ENCODE measurements at regions of chr3 and their contacts with region 1.

Region 1: GRCh38 chr3:79521238-79521848 is 246.5 kb downstream of the ROBO1 start:
- DNase-seq: peak; percentile 73
- H3K4me3 ChIP-seq: no peak overlapping the region
- H3K27ac ChIP-seq: no peak overlapping the region
- H3K4me1 ChIP-seq: peaks cover 18% of the 10 kb centered on the region
- H3K27me3 ChIP-seq: no peaks in the 10 kb centered on the region
- CTCF ChIP-seq: peak; percentile 71

Region 2: DNA sequence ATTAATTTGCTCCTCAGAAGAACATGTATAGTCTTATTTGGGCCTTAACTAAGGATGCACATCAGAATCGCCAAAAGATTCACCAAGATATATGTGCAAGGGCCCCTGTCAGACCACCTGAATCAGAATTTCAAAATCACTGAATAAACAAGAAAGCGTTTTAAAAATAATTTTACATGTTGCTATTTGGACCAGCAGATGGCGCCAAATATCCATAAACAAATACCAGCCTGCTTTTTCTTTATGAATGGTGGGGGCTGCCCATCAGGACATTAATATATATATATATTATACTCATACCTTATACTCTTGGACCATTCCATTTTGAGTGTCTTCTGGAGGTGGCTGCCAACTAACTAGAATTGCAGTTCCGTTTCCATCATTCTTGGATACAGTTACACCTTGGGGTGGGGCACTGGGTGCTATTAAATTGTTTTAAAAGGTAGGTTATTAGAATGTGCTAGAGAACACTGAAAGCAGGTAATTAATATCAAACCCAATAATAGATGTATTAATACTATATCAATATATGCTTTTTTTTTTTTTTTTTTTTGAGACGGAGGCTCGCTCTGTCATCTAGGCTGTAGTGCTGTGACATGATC is 861.9 kb before region 1 on chr3:
- CTCF ChIA-PET with region 1: no interaction called
- POLR2A ChIA-PET with region 1: no interaction called
- intact Hi-C with region 1: loop called (anchors 5 kb)
- DNase-seq: peak; percentile 72
- H3K4me3 ChIP-seq: no peak overlapping the region
- H3K27ac ChIP-seq: no peak overlapping the region
- H3K4me1 ChIP-seq: peaks cover 21% of the 10 kb centered on the region
- H3K27me3 ChIP-seq: no peaks in the 10 kb centered on the region
- CTCF ChIP-seq: peak; percentile 72

Region 3: DNA sequence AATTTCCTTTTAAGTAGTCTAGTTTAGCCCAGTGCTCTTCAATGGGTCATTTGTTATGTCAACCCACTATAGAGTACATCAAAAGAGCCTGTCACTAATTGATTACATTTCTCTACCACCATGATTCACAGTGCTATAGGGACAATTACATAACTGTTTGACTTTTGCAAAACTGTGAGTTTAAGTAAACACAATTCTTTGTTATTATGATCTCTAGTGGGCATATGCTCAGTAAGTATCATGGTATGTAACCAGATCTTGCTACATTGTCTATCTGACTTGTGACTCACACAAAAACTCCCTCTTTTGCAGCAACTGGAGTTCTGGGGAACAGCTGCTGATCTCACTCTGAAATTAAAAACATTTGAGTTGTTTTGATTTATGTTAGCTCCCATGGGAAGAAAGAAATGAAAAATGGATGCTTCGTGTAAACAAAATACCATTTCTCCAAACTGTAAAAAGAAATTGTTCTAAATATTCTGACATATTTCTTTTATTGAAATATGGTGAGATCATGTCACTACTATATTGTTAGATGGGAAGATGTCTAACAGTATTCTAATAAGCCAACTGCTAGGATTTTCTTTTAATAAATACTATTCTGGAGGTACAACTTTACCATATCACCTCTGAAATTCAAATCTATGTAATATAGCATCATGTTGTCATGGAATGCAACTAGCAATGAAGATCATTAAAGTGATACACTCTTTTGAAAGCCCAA is 223.9 kb before region 1 on chr3:
- CTCF ChIA-PET with region 1: no interaction called
- POLR2A ChIA-PET with region 1: no interaction called
- intact Hi-C with region 1: no loop called
- DNase-seq: peak; percentile 7
- H3K4me3 ChIP-seq: no peak overlapping the region
- H3K27ac ChIP-seq: no peak overlapping the region
- H3K4me1 ChIP-seq: no peaks in the 10 kb centered on the region
- H3K27me3 ChIP-seq: no peaks in the 10 kb centered on the region
- CTCF ChIP-seq: no peak

Region 4: DNA sequence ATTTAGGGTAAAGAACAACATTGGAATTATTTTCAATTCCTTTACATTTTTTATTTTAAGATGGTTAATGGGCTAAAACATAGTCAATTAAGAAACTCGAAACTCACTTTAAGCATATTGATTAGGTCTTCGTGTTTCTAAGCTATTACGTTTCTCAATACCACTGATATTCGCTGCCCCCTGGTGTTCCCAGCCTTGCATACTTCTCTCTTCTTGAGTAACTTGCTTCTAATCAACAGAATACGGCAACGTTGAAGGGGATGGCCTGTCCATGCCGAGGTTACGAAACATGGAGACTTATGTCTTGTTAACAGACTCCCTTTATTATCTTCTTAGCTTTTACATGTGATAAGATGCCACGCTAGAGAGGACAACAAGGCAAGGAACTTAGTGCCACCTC is 202.9 kb after region 1 on chr3:
- CTCF ChIA-PET with region 1: interaction called, 10 read pairs
- POLR2A ChIA-PET with region 1: no interaction called
- intact Hi-C with region 1: loop called (anchors 2 kb)
- DNase-seq: peak; percentile 35
- H3K4me3 ChIP-seq: no peak overlapping the region
- H3K27ac ChIP-seq: no peak overlapping the region
- H3K4me1 ChIP-seq: peaks cover 2% of the 10 kb centered on the region
- H3K27me3 ChIP-seq: no peaks in the 10 kb centered on the region
- CTCF ChIP-seq: peak; percentile 53

Region 5: GRCh38 chr3:79846148-79846933 is 325.0 kb after region 1 on chr3:
- CTCF ChIA-PET with region 1: no interaction called
- POLR2A ChIA-PET with region 1: no interaction called
- intact Hi-C with region 1: loop called (anchors 2 kb)
- DNase-seq: peak; percentile 38
- H3K4me3 ChIP-seq: no peak overlapping the region
- H3K27ac ChIP-seq: no peak overlapping the region
- H3K4me1 ChIP-seq: no peaks in the 10 kb centered on the region
- H3K27me3 ChIP-seq: no peaks in the 10 kb centered on the region
- CTCF ChIP-seq: peak; percentile 77

Region 6: GRCh38 chr3:80097674-80098073 is 576.3 kb after region 1 on chr3:
- CTCF ChIA-PET with region 1: no interaction called
- POLR2A ChIA-PET with region 1: no interaction called
- intact Hi-C with region 1: loop called (anchors 10 kb)
- DNase-seq: peak; percentile 70
- H3K4me3 ChIP-seq: no peak overlapping the region
- H3K27ac ChIP-seq: no peak overlapping the region
- H3K4me1 ChIP-seq: peaks cover 19% of the 10 kb centered on the region
- H3K27me3 ChIP-seq: no peaks in the 10 kb centered on the region
- CTCF ChIP-seq: no peak

Region 7: GRCh38 chr3:80688814-80689213 is 1167.5 kb after region 1 on chr3:
- CTCF ChIA-PET with region 1: no interaction called
- POLR2A ChIA-PET with region 1: no interaction called
- intact Hi-C with region 1: loop called (anchors 2 kb)
- DNase-seq: peak; percentile 30
- H3K4me3 ChIP-seq: no peak overlapping the region
- H3K27ac ChIP-seq: no peak overlapping the region
- H3K4me1 ChIP-seq: no peaks in the 10 kb centered on the region
- H3K27me3 ChIP-seq: no peaks in the 10 kb centered on the region
- CTCF ChIP-seq: peak; percentile 52; the same call in 1 of the 2 replicates

Region 8: GRCh38 chr3:81242871-81243270 is 1721.5 kb after region 1 on chr3:
- CTCF ChIA-PET with region 1: no interaction called
- POLR2A ChIA-PET with region 1: no interaction called
- intact Hi-C with region 1: loop called (anchors 2 kb)
- DNase-seq: peak; percentile 52
- H3K4me3 ChIP-seq: no peak overlapping the region
- H3K27ac ChIP-seq: no peak overlapping the region
- H3K4me1 ChIP-seq: no peaks in the 10 kb centered on the region
- H3K27me3 ChIP-seq: no peaks in the 10 kb centered on the region
- CTCF ChIP-seq: peak; percentile 62

Measured in A673 (cell line).